CD14-positive monocyte (primary cell): ENCODE measurements at regions of chr5 and their contacts with region 1.

Region 1: GRCh38 chr5:121979691-121980090 is 17.9 kb downstream of the SRFBP1 start:
- DNase-seq: peak; percentile 34 to 81 (median 73)
- H3K4me3 ChIP-seq: peak overlapping the region in 1 of 3 experiments; percentile 51
- H3K4me3 Mint-ChIP-seq: peak overlapping the region in 1 of 2 donors; percentile 77
- H3K27ac ChIP-seq: peak overlapping the region in 1 of 2 donors; percentile 75
- H3K27ac Mint-ChIP-seq: peak overlapping the region; percentile 17 to 86 (median 77)
- H3K4me1 ChIP-seq: peaks cover 16 to 19% of the 10 kb centered on the region in 2 donors
- H3K4me1 Mint-ChIP-seq: peaks cover 24% of the 10 kb centered on the region
- H3K27me3 ChIP-seq: no peaks in the 10 kb centered on the region
- H3K27me3 Mint-ChIP-seq: no peaks in the 10 kb centered on the region
- CTCF ChIP-seq: no peak

Region 2: DNA sequence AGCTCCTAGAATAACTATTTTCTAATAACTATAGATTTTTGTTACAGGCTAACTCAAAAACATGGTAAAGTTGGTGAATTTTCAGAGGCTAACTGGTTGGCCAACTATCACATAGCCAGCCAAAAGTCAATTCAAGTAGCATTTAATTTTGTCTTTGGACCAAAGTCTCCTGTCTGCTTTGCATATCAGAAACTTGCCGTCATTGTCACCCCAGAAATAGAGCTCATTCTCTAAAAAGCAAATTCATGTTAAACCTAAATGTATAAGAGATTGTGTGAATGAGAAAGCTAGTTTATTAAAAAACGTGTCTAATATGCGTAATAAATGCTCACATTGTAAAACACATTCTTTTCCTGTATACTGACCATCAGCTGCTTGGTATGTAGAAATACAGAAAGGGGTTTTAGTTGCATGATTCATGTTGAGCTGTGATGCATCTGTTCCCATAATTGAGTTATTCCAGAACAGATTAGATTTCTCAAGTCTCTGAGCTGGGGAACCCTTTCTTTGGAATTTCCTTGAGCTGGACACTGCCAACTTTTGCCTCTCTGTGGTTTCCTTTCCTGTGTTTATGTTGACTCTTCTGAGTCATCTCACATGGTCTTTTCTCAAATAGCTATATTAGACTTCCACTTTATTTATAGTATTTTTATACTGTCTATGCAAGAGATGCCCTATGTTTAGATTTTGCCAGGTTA is 10.6 kb before region 1 on chr5:
- intact Hi-C with region 1: loop called in 1 of 2 experiments (anchors 2 kb)
- DNase-seq: peak in 1 of 3 donors; percentile 65
- H3K4me3 ChIP-seq: no peak overlapping the region
- H3K4me3 Mint-ChIP-seq: no peak overlapping the region
- H3K27ac ChIP-seq: no peak overlapping the region
- H3K27ac Mint-ChIP-seq: peak overlapping the region in 1 of 7 donors; percentile 48
- H3K4me1 ChIP-seq: no peaks in the 10 kb centered on the region
- H3K4me1 Mint-ChIP-seq: peaks cover 14% of the 10 kb centered on the region
- H3K27me3 ChIP-seq: no peaks in the 10 kb centered on the region
- H3K27me3 Mint-ChIP-seq: no peaks in the 10 kb centered on the region
- CTCF ChIP-seq: no peak